ENCODE measurements at regions of chr4 and their contacts with region 1.

Region 1: GRCh38 chr4:52869196-52869595 is 7.1 kb downstream of the RASL11B start:
- DNase-seq: peak; percentile 32 to 85 (median 74)
- H3K4me3 ChIP-seq: peak overlapping the region in 22 of 59 donors; percentile 1 to 43 (median 24)
- H3K27ac ChIP-seq: peak overlapping the region in 51 of 59 donors; percentile 13 to 80 (median 55)
- H3K27me3 ChIP-seq: no peaks in the 10 kb centered on the region
- CTCF ChIP-seq: peak in 9 of 56 donors; percentile 8 to 37 (median 10)

Region 2: DNA sequence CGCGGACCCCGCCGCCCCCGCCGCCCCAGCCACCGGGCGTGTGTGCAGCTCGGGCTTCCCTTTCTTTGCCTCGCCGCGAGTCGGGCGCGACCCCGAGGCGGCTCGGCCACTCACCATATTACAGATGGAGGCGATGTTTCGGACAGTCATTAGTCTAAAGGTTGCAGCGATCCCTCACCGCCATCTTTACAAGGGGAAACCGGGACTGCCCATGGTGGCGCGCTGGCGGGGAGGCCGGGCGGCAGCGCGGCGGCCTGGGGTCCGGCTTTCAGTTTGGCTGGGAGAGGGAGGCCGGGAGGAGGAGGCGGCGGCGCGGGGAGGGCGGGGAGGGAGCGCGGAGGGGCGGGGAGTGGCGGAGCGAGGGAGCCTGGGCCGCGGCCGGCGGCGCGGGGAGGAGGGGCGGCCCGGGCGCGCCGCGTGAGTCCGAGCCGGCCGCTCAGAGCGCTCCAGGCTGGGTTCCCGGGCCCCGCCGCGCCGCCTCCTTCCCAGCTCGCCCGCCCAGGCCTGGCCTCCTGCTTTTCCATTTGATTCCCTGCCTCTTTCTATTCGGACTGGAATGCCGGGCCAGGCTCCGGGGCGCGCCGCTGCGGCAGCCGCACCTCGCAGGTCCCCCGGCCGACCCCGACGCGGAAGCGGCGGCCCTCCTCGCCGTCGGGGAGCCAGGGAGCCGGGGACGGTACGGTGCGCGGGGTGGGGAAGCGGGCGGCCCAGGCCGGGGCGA is 210.0 kb before region 1 on chr4 and contains the start of gene USP46:
- intact Hi-C with region 1: loop called in 1 of 2 experiments (anchors 5 kb)
- DNase-seq: peak; percentile 42 to 80 (median 64)
- H3K4me3 ChIP-seq: peak within 1 kb of the TSS; percentile 62 to 94 (median 79)
- H3K27ac ChIP-seq: peak within 1 kb of the TSS; percentile 45 to 98 (median 92)
- H3K27me3 ChIP-seq: no peaks in the 10 kb centered on the region
- CTCF ChIP-seq: peak in 3 of 56 donors; percentile 3 to 13 (median 8)
- total RNA-seq, gene USP46: 55.4 to 143 (median 107) TPM

Region 3: DNA sequence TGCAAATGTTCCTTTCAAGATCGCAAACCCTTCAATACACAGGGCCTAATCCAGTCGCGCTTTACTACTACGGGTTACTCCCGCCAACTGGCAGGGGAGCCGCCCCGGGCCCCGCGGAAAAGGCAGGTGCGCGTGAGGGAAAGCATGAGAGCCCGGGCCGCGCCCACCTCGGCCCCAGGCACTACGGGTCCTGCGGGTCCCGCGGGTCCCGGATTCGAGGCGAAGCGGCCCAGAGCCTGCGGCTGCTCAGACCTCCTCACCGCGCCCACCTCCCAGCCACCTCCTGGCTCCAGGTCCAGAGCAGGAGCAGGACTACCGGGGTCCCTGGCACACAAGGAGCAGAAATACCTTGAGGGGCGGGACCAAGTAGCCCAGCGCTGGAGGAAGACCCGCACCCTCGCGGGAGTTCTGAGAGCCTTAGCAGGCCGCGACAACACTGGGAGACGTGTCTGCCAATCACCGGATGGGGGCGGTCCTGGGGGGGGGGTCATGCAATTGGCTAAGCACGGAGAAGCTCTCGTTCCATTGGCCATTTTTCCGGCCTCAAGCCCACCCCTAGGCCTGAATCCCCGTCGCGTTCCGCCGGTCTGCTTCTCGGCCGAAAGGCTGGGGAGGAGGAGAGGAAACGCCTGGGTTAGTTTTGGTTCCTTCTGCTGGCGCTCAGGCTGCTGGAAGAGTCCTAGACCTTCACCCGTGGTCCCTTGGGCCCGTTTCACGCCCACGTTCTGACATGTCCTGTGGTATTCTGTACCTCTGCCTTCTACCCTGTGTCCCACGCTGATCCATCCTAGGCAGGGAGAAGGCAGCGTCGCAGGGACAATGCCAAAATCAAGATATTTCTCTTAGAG is 147.0 kb before region 1 on chr4:
- intact Hi-C with region 1: loop called in 1 of 2 experiments (anchors 5 kb)
- DNase-seq: peak; percentile 78 to 94 (median 92)
- H3K4me3 ChIP-seq: peak overlapping the region; percentile 67 to 98 (median 88)
- H3K27ac ChIP-seq: peak overlapping the region; percentile 50 to 98 (median 93)
- H3K27me3 ChIP-seq: no peaks in the 10 kb centered on the region
- CTCF ChIP-seq: peak in 41 of 56 donors; percentile 6 to 54 (median 35)

Region 4: GRCh38 chr4:52911684-52912294 is 42.6 kb after region 1 on chr4:
- intact Hi-C with region 1: loop called in 1 of 2 experiments (anchors 5 kb)
- DNase-seq: peak in 8 of 10 donors; percentile 45 to 70 (median 53)
- H3K4me3 ChIP-seq: no peak overlapping the region
- H3K27ac ChIP-seq: no peak overlapping the region
- H3K27me3 ChIP-seq: no peaks in the 10 kb centered on the region
- CTCF ChIP-seq: peak; percentile 10 to 74 (median 64)

Region 5: DNA sequence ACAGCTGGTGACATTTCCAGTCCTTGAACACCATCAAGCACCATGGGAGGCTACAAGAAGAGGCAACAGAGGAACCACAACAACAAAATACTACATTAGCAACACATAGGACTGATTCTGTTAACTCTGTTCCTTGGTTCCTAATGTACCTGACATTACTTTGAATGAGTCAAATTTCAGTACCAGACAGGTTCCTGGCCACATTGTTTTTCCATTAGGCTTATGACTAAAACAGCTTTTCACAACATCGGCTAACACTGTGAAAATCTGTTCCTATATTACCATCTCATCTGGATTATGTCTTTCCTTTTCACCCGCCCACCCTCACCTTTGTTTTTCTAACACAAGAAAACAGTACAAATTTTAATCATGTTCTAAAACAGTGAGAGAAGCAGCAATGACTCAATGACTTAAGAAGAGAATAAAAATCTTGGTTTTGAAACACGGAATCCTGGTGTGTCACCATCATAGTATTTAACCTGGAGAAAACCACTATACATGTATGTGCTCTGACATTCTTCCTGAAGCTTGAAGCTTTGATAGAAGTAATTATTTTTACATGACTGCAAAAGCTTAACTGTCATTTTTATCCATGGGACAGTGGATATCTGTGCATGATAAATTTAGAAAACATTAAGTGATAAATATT is 352.8 kb after region 1 on chr4:
- intact Hi-C with region 1: no loop called
- DNase-seq: no peak
- H3K4me3 ChIP-seq: no peak overlapping the region
- H3K27ac ChIP-seq: no peak overlapping the region
- H3K27me3 ChIP-seq: no peaks in the 10 kb centered on the region
- CTCF ChIP-seq: no peak

Measured in dorsolateral prefrontal cortex (tissue), 120 donors.